ENCODE measurements at regions of chr12 and their contacts with region 1.

Region 1: GRCh38 chr12:86015019-86015418 is 140.9 kb downstream of the NTS start:
- DNase-seq: no peak
- H3K4me3 ChIP-seq: no peak overlapping the region
- H3K27ac ChIP-seq: no peak overlapping the region
- H3K4me1 ChIP-seq: no peaks in the 10 kb centered on the region
- H3K27me3 ChIP-seq: no peaks in the 10 kb centered on the region
- CTCF ChIP-seq: no peak

Region 2: GRCh38 chr12:85182699-85183098 is 832.3 kb before region 1 on chr12:
- CTCF ChIA-PET with region 1: no interaction called
- POLR2A ChIA-PET with region 1: no interaction called
- intact Hi-C with region 1: no loop called
- DNase-seq: no peak
- H3K4me3 ChIP-seq: no peak overlapping the region
- H3K27ac ChIP-seq: no peak overlapping the region
- H3K4me1 ChIP-seq: peaks cover 9% of the 10 kb centered on the region
- H3K27me3 ChIP-seq: no peaks in the 10 kb centered on the region
- CTCF ChIP-seq: no peak

Region 3: GRCh38 chr12:85711735-85712390 is 303.2 kb before region 1 on chr12:
- CTCF ChIA-PET with region 1: no interaction called
- POLR2A ChIA-PET with region 1: no interaction called
- intact Hi-C with region 1: no loop called
- DNase-seq: no peak
- H3K4me3 ChIP-seq: no peak overlapping the region
- H3K27ac ChIP-seq: no peak overlapping the region
- H3K4me1 ChIP-seq: no peaks in the 10 kb centered on the region
- H3K27me3 ChIP-seq: no peaks in the 10 kb centered on the region
- CTCF ChIP-seq: no peak

Region 4: GRCh38 chr12:85923767-85924331 is 91.2 kb before region 1 on chr12:
- CTCF ChIA-PET with region 1: no interaction called
- POLR2A ChIA-PET with region 1: no interaction called
- intact Hi-C with region 1: no loop called
- DNase-seq: peak; percentile 50
- H3K4me3 ChIP-seq: no peak overlapping the region
- H3K27ac ChIP-seq: no peak overlapping the region
- H3K4me1 ChIP-seq: peaks cover 3% of the 10 kb centered on the region
- H3K27me3 ChIP-seq: no peaks in the 10 kb centered on the region
- CTCF ChIP-seq: peak; percentile 74

Region 5: GRCh38 chr12:86331012-86331411 is 316.0 kb after region 1 on chr12:
- CTCF ChIA-PET with region 1: no interaction called
- POLR2A ChIA-PET with region 1: interaction called, 29 read pairs
- intact Hi-C with region 1: no loop called
- DNase-seq: peak; percentile 37
- H3K4me3 ChIP-seq: no peak overlapping the region
- H3K27ac ChIP-seq: no peak overlapping the region
- H3K4me1 ChIP-seq: peaks cover 7% of the 10 kb centered on the region
- H3K27me3 ChIP-seq: no peaks in the 10 kb centered on the region
- CTCF ChIP-seq: no peak

Region 6: GRCh38 chr12:86772696-86773095 is 757.7 kb after region 1 on chr12:
- CTCF ChIA-PET with region 1: interaction called, 11 read pairs
- POLR2A ChIA-PET with region 1: no interaction called
- intact Hi-C with region 1: no loop called
- DNase-seq: no peak
- H3K4me3 ChIP-seq: no peak overlapping the region
- H3K27ac ChIP-seq: no peak overlapping the region
- H3K4me1 ChIP-seq: no peaks in the 10 kb centered on the region
- H3K27me3 ChIP-seq: no peaks in the 10 kb centered on the region
- CTCF ChIP-seq: no peak

Measured in A673 (cell line).